CD4-positive, alpha-beta memory T cell (primary cell): ENCODE measurements at regions of chr19 and their contacts with region 1.

Region 1: GRCh38 chr19:38402967-38403861 is at the start of gene FAM98C:
- DNase-seq: peak; percentile 97 to 99 (median 98)
- H3K4me3 ChIP-seq: peak within 1 kb of the TSS; percentile 52 to 94
- H3K4me3 Mint-ChIP-seq: peak within 1 kb of the TSS; percentile 89 to 95 (median 90)
- H3K27ac ChIP-seq: peak within 1 kb of the TSS; percentile 77
- H3K27ac Mint-ChIP-seq: peak within 1 kb of the TSS; percentile 88 to 97 (median 96)
- H3K4me1 ChIP-seq: peaks cover 15% of the 10 kb centered on the region
- H3K4me1 Mint-ChIP-seq: peaks cover 2 to 17% (median 13%) of the 10 kb centered on the region in 4 donors
- H3K27me3 ChIP-seq: no peaks in the 10 kb centered on the region
- H3K27me3 Mint-ChIP-seq: no peaks in the 10 kb centered on the region
- total RNA-seq, gene FAM98C: 53.1 to 53.8 TPM

Region 2: GRCh38 chr19:38057959-38058710 is 345.1 kb before region 1 on chr19:
- CTCF ChIA-PET with region 1: no interaction called
- POLR2A ChIA-PET with region 1: no interaction called
- intact Hi-C with region 1: no loop called
- DNase-seq: no peak
- H3K4me3 ChIP-seq: no peak overlapping the region
- H3K4me3 Mint-ChIP-seq: no peak overlapping the region
- H3K27ac ChIP-seq: no peak overlapping the region
- H3K27ac Mint-ChIP-seq: peak overlapping the region in 4 of 7 donors; percentile 22 to 70 (median 36)
- H3K4me1 ChIP-seq: no peaks in the 10 kb centered on the region
- H3K4me1 Mint-ChIP-seq: peaks cover 2 to 21% (median 7%) of the 10 kb centered on the region in 4 donors
- H3K27me3 ChIP-seq: no peaks in the 10 kb centered on the region
- H3K27me3 Mint-ChIP-seq: no peaks in the 10 kb centered on the region

Region 3: DNA sequence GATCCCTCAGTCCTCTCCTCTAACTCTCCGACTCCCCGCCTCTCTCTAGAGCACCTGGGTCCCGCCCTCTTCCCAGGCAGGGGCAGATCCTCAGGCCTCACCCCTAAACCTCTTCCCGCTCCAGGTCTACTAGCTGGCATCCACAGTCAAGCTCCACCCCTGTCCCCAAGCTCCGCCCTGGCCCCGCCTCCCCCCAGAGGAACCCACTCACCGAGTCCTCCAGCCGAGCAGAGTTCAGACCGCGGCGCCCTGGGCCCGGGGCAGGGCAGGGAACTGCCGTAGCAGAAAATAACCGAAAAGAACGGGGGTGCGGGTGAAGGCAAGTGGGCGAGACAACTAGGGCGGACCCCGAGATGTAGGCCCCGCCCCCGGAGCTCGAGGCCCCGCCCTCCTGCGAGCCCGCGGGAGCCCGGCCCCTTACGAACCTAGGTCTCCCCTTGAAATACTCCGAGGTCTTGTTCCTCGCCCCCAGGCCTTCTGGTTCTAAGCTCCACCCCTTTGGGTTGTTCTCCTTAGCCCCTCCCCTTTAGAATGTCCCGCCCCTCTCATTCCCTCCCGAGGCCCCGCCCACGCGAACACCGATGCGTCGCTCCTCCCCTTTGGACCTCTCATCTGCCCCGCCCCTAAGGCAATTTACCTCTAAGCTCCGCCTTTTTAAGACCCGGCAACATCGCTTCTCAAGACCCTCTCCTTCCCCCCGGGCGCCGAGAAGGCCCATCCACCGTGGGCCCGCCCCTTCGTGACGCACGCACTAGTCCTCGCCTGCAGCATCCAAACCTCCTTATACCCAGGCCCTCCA is 15.5 kb before region 1 on chr19 and contains the start of gene GGN:
- CTCF ChIA-PET with region 1: interaction called, 16 read pairs
- POLR2A ChIA-PET with region 1: interaction called, 31 read pairs
- intact Hi-C with region 1: loop called (anchors 1 kb)
- DNase-seq: peak; percentile 77 to 92 (median 80)
- H3K4me3 ChIP-seq: peak within 1 kb of the TSS; percentile 65 to 70
- H3K4me3 Mint-ChIP-seq: peak within 1 kb of the TSS; percentile 89 to 98 (median 94)
- H3K27ac ChIP-seq: peak within 1 kb of the TSS; percentile 21
- H3K27ac Mint-ChIP-seq: peak within 1 kb of the TSS; percentile 80 to 99 (median 95)
- H3K4me1 ChIP-seq: peaks cover 31% of the 10 kb centered on the region
- H3K4me1 Mint-ChIP-seq: peaks cover 12 to 44% (median 18%) of the 10 kb centered on the region in 4 donors
- H3K27me3 ChIP-seq: no peaks in the 10 kb centered on the region
- H3K27me3 Mint-ChIP-seq: peaks cover 0 to 11% of the 10 kb centered on the region in 2 donors
- total RNA-seq, gene GGN: 0.15 TPM in 1 of 2 experiments, not detected in the other

Region 4: DNA sequence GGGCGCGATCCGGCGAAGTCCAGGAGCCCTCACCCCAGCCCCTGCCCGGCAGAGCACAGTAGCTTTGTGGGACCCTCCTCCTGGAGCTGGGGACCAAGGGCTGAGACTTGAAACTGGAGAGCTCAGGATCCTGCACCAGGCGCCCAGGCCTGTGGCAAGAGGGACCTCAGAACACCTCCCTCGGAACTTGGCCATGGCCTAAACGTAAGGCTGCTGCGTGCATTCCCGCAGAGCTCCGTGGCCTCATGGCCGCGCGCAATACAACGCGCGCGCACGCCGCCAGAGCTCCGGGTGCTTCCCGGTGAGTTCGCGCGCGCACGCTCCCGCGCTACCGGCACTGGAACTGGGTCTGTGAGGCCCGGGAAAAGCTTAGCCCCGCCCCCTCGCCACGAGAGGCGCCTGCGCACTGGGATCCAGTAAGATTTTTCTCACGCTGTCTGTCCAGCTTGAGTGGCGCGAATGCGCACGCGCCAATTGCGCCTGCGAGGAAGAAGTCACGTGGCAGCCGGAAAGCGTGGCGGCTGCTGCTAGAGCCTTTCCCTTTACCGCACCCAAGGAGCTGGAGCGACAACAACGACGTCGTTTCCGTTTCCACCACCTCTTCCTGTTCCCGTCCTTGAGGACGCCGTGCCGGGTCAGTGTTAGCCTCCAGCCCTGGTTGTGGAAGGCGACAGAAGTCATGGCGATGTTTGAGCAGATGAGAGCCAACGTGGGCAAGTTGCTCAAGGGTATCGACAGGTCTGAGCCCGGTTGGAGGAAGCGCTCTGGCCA is 215.6 kb after region 1 on chr19 and contains the start of gene EIF3K:
- CTCF ChIA-PET with region 1: interaction called, 9 read pairs
- POLR2A ChIA-PET with region 1: interaction called, 21 read pairs
- intact Hi-C with region 1: loop called (anchors 2 kb)
- DNase-seq: peak; percentile 95 to 97 (median 96)
- H3K4me3 ChIP-seq: peak within 1 kb of the TSS; percentile 97 to 99
- H3K4me3 Mint-ChIP-seq: peak within 1 kb of the TSS; percentile 95 to 100 (median 100)
- H3K27ac ChIP-seq: peak within 1 kb of the TSS; percentile 90
- H3K27ac Mint-ChIP-seq: peak within 1 kb of the TSS; percentile 93 to 100 (median 99)
- H3K4me1 ChIP-seq: peaks cover 57% of the 10 kb centered on the region
- H3K4me1 Mint-ChIP-seq: peaks cover 28 to 60% (median 45%) of the 10 kb centered on the region in 4 donors
- H3K27me3 ChIP-seq: no peaks in the 10 kb centered on the region
- H3K27me3 Mint-ChIP-seq: no peaks in the 10 kb centered on the region
- total RNA-seq, gene EIF3K: 320 to 340 TPM

Region 5: GRCh38 chr19:38729653-38730469 is 326.6 kb after region 1 on chr19:
- CTCF ChIA-PET with region 1: interaction called, 3 read pairs
- POLR2A ChIA-PET with region 1: interaction called, 7 read pairs
- intact Hi-C with region 1: loop called (anchors 5 kb)
- DNase-seq: peak; percentile 67 to 73 (median 70)
- H3K4me3 ChIP-seq: no peak overlapping the region
- H3K4me3 Mint-ChIP-seq: no peak overlapping the region
- H3K27ac ChIP-seq: no peak overlapping the region
- H3K27ac Mint-ChIP-seq: peak overlapping the region; percentile 19 to 88 (median 61)
- H3K4me1 ChIP-seq: peaks cover 20% of the 10 kb centered on the region
- H3K4me1 Mint-ChIP-seq: peaks cover 16 to 62% (median 29%) of the 10 kb centered on the region in 4 donors
- H3K27me3 ChIP-seq: no peaks in the 10 kb centered on the region
- H3K27me3 Mint-ChIP-seq: no peaks in the 10 kb centered on the region

Region 6: GRCh38 chr19:38891771-38892170 is 488.6 kb after region 1 on chr19:
- CTCF ChIA-PET with region 1: interaction called, 19 read pairs
- POLR2A ChIA-PET with region 1: interaction called, 3 read pairs
- intact Hi-C with region 1: loop called (anchors 1 kb)
- DNase-seq: no peak
- H3K4me3 ChIP-seq: no peak overlapping the region
- H3K4me3 Mint-ChIP-seq: no peak overlapping the region
- H3K27ac ChIP-seq: no peak overlapping the region
- H3K27ac Mint-ChIP-seq: peak overlapping the region in 1 of 7 donors; percentile 13
- H3K4me1 ChIP-seq: peaks cover 4% of the 10 kb centered on the region
- H3K4me1 Mint-ChIP-seq: peaks cover 2 to 13% (median 5%) of the 10 kb centered on the region in 4 donors
- H3K27me3 ChIP-seq: no peaks in the 10 kb centered on the region
- H3K27me3 Mint-ChIP-seq: no peaks in the 10 kb centered on the region